ENCODE measurements at regions of chr18 and their contacts with region 1.

Region 1: DNA sequence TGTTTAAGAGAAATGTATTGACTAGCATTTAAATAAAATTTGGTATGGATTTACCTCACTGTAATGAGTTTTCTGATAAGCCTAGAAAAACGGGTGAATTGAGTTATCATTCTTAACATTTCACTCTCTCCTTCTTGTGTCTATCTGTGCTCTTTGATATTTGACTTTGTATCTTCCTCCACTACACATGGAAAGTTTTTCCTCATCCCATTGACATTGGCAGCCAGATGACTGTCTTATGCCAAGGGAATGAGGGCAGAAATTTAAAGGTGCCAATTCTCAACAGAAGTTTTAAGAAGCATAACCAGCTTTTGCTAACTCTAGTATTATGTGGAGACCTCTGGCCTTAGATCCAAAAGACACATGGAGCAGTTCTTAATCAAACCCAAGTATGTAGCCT is 376.6 kb downstream of the DSEL start:
- DNase-seq: no peak

Region 2: DNA sequence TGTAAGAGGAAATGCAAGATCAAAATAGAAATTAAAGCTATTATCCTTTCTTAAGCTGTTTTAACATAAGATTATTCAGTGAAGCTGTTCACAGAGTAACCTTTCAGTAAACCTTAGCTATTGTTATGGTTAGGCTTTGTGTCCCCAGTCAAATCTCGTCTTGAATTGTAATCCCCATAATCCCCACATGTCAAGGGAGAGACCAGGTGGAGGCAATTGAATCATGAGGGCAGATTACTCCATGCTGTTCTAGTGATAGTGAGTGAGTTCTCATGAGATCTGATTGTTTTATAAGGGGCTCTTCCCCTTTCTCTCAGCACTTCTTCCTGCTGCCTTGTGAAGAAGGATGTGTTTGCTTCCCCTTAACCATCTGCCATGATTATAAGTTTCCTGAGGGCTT is 47.8 kb before region 1 on chr18:
- intact Hi-C with region 1: loop called in 1 of 2 experiments (anchors 2 kb)
- DNase-seq: no peak

Measured in posterior vena cava (tissue), 2 donors.